Panc1 (cell line): ENCODE measurements at regions of chr11 and their contacts with region 1.

Region 1: GRCh38 chr11:888310-889212 is 22.0 kb downstream of the CHID1 start:
- DNase-seq: no peak
- ATAC-seq: no peak
- H3K4me3 ChIP-seq: no peak overlapping the region
- H3K27ac ChIP-seq: no peak overlapping the region
- H3K4me1 ChIP-seq: peaks cover 19% of the 10 kb centered on the region
- H3K27me3 ChIP-seq: no peaks in the 10 kb centered on the region
- CTCF ChIP-seq: no peak

Region 2: DNA sequence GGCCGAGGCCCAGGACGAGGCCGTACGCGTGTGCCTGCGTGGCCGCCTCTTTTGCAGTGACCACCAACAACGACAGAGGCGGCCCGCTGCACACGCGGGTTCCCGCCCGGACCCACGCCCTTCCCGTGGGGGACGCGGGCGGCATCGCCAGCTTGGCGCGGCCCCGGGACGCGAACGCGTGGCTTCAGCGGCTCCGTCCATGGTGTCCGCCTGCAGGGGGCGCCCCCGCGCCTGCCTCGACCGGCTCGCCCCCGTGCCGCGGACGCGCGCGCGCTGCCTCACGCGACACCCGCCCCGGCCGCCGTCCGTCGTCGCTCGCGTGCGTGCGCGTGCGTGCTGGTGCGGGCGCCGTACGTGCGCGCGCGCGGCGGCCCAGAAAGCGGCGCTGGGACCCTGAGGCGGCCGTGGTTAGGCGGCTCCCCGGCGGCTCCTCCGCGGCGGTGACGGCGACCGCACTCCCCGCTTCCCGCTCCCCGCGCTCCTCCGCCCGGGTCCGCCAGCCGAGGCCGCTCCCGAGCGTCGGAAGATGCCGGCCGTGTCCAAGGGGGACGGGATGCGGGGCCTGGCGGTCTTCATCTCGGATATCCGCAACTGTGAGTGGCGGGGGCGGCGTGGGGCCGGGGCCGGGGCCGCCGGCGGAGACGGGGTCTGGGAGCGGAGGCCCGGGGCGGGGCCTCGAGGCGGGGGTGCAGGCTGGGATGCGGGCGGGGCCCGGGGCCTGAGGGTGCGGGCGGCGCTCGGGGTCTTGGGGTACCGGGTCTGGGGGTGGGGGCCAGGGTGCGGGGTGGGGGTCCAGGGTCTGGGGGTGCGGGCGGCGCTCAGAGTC is 37.1 kb after region 1 on chr11 and contains the start of gene AP2A2:
- CTCF ChIA-PET with region 1: interaction called, 12 read pairs
- POLR2A ChIA-PET with region 1: no interaction called
- in situ Hi-C with region 1: no loop called
- intact Hi-C with region 1: no loop called
- DNase-seq: no peak
- ATAC-seq: peak; percentile 91
- H3K4me3 ChIP-seq: peak within 1 kb of the TSS; percentile 60 to 75
- H3K27ac ChIP-seq: peak within 1 kb of the TSS; percentile 73
- H3K4me1 ChIP-seq: peaks cover 16% of the 10 kb centered on the region; the same call in 1 of the 2 replicates
- H3K27me3 ChIP-seq: no peaks in the 10 kb centered on the region
- CTCF ChIP-seq: peak; percentile 100
- total RNA-seq, gene AP2A2: 123 TPM

Region 3: GRCh38 chr11:976431-977160 is 88.0 kb after region 1 on chr11:
- CTCF ChIA-PET with region 1: no interaction called
- POLR2A ChIA-PET with region 1: no interaction called
- in situ Hi-C with region 1: no loop called
- intact Hi-C with region 1: no loop called
- DNase-seq: no peak
- ATAC-seq: peak; percentile 22; the same call in 1 of the 2 replicates
- H3K4me3 ChIP-seq: no peak overlapping the region
- H3K27ac ChIP-seq: no peak overlapping the region
- H3K4me1 ChIP-seq: no peaks in the 10 kb centered on the region
- H3K27me3 ChIP-seq: no peaks in the 10 kb centered on the region
- CTCF ChIP-seq: no peak